ENCODE measurements at regions of chr1 and their contacts with region 1.

Region 1: GRCh38 chr1:153352523-153352922 is 3.9 kb upstream of the PGLYRP4 start:
- DNase-seq: peak; percentile 72
- H3K4me3 ChIP-seq: no peak overlapping the region
- H3K27ac ChIP-seq: no peak overlapping the region
- H3K4me1 ChIP-seq: no peaks in the 10 kb centered on the region
- H3K27me3 ChIP-seq: peaks cover 53% of the 10 kb centered on the region
- CTCF ChIP-seq: peak; percentile 94

Region 2: DNA sequence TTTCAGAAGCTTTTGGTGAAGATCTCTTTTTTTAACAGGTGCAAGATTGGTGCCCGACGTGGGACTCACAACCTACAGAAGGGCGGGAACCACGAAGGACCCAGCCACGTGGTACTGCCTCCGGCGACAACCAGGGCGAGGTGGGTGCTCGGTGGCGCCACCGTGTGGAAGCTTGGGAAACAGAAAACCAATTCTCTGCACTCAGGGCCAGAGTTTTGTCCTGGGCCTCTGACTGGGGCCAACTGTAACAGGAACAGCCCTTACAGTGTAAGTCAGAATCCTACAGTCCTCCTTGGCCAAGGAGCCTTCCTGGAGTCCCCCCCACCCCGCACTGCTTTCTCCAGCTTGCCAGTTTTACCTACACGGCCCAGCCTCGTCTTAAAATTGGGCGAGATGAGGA is 52.2 kb after region 1 on chr1:
- CTCF ChIA-PET with region 1: interaction called, 3 read pairs
- POLR2A ChIA-PET with region 1: no interaction called
- intact Hi-C with region 1: loop called (anchors 5 kb)
- DNase-seq: peak; percentile 49
- H3K4me3 ChIP-seq: no peak overlapping the region
- H3K27ac ChIP-seq: no peak overlapping the region
- H3K4me1 ChIP-seq: no peaks in the 10 kb centered on the region
- H3K27me3 ChIP-seq: peaks cover 40% of the 10 kb centered on the region
- CTCF ChIP-seq: peak; percentile 62